ENCODE measurements at regions of chr1 and their contacts with region 1.

Region 1: DNA sequence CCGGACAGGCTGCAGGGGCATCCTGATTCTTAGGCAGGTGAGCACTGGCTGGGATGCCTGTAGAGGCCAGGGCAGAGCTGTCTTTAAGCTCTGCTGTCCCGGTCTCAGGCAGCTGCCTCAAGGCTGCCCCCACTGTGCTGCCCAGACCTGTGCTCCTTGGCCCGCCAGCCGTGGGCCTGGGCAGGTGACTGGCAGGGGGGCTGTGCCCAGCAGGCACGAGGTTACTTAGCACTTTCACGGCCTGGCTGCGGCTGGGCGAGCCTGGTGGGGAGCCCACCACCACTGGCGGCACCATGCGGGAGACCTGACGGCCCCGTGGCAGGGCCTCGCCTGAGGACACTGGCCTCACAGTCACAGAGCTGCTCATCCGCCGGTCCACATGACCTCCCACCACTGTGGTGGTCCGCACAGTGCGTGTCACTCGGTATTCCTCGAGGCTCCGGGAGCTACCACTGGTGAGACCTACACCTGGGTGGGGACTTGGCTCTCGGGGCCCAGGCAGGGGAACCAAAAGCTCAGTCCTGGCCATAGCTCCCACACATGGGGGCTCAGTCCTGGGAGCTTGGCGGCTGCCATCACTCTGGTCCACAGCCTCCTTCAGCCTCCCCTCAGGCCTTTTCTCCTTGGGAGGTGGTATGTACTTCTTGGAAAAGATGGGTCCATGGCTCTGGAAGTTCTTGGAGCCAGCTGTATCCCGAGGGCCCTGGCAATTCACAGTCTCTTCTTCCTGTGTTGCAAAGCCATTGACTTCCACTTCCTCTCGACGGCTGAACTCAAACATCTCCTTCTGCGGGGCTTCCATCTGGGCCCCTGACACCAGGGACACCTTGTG is 8.0 kb downstream of the CRYBG2 start:
- DNase-seq: no peak
- ATAC-seq: peak; percentile 21; the same call in 1 of the 3 replicates
- H3K4me3 ChIP-seq: no peak overlapping the region
- H3K27ac ChIP-seq: no peak overlapping the region
- H3K4me1 ChIP-seq: peaks cover 10 to 22% of the 10 kb centered on the region in 2 experiments
- H3K27me3 ChIP-seq: no peaks in the 10 kb centered on the region
- CTCF ChIP-seq: no peak
- EP300 ChIP-seq: no peak
- POLR2A ChIP-seq: no peak
- RAD21 ChIP-seq: no peak

Region 2: DNA sequence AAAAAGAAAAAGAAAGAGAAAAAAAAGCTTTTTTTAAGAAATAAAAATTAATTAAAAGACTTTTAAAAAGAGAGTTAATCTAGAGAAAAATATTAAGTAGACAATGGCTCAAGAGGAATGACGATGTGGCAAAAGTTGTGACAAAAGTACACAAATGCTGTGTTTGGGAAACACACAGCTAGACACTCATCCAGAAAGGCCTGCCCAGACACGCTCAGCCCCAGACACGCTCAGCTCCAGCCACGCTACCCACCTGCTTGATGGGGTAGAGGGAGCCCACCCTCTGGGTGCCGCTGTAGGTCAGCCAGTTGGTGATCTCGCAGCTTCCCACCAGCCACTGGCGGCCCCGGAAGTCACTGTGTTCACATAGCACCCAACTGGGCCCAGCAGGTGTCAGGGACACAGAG is 18.0 kb before region 1 on chr1:
- CTCF ChIA-PET with region 1: no interaction called
- POLR2A ChIA-PET with region 1: interaction called, 10 read pairs
- in situ Hi-C with region 1: no loop called
- intact Hi-C with region 1: no loop called
- DNase-seq: peak in 1 of 4 experiments; percentile 45
- ATAC-seq: peak; percentile 54
- H3K4me3 ChIP-seq: no peak overlapping the region
- H3K27ac ChIP-seq: no peak overlapping the region
- H3K4me1 ChIP-seq: peaks cover 2 to 13% of the 10 kb centered on the region in 2 experiments; a peak in 3 of 5 replicates
- H3K27me3 ChIP-seq: no peaks in the 10 kb centered on the region
- CTCF ChIP-seq: peak; percentile 33 to 46 (median 36); a peak in 4 of 6 replicates
- EP300 ChIP-seq: no peak
- POLR2A ChIP-seq: no peak
- RAD21 ChIP-seq: peak in 1 of 2 experiments; percentile 31; a peak in 2 of 4 replicates

Region 3: GRCh38 chr1:26482921-26483680 is 137.2 kb after region 1 on chr1:
- CTCF ChIA-PET with region 1: no interaction called
- POLR2A ChIA-PET with region 1: no interaction called
- in situ Hi-C with region 1: no loop called
- intact Hi-C with region 1: no loop called
- DNase-seq: no peak
- ATAC-seq: no peak
- H3K4me3 ChIP-seq: no peak overlapping the region
- H3K27ac ChIP-seq: no peak overlapping the region
- H3K4me1 ChIP-seq: peaks cover 15 to 16% of the 10 kb centered on the region in 2 experiments
- H3K27me3 ChIP-seq: no peaks in the 10 kb centered on the region
- CTCF ChIP-seq: no peak
- EP300 ChIP-seq: no peak
- POLR2A ChIP-seq: no peak
- RAD21 ChIP-seq: no peak